Left lung (tissue), 14 donors: ENCODE measurements at regions of chr2 and their contacts with region 1.

Region 1: GRCh38 chr2:190781604-190782198 is 98.9 kb upstream of the GLS start:
- DNase-seq: peak in 1 of 4 donors; percentile 57
- ATAC-seq: peak; percentile 83
- H3K4me3 ChIP-seq: no peak overlapping the region
- H3K27ac ChIP-seq: no peak overlapping the region
- H3K4me1 ChIP-seq: peaks cover 0 to 5% of the 10 kb centered on the region in 2 donors
- H3K27me3 ChIP-seq: no peaks in the 10 kb centered on the region
- CTCF ChIP-seq: peak; percentile 43 to 52

Region 2: GRCh38 chr2:190534310-190535120 is 247.2 kb before region 1 on chr2 and contains the start of gene NEMP2:
- intact Hi-C with region 1: no loop called
- DNase-seq: peak; percentile 81 to 97 (median 86)
- ATAC-seq: peak; percentile 93
- H3K4me3 ChIP-seq: peak within 1 kb of the TSS; percentile 69 to 80
- H3K27ac ChIP-seq: peak within 1 kb of the TSS; percentile 94 to 95
- H3K4me1 ChIP-seq: peaks cover 5 to 36% of the 10 kb centered on the region in 2 donors
- H3K27me3 ChIP-seq: no peaks in the 10 kb centered on the region
- CTCF ChIP-seq: no peak
- polyA plus RNA-seq, gene NEMP2: 10.2 to 22.8 (median 17.8) TPM

Region 3: DNA sequence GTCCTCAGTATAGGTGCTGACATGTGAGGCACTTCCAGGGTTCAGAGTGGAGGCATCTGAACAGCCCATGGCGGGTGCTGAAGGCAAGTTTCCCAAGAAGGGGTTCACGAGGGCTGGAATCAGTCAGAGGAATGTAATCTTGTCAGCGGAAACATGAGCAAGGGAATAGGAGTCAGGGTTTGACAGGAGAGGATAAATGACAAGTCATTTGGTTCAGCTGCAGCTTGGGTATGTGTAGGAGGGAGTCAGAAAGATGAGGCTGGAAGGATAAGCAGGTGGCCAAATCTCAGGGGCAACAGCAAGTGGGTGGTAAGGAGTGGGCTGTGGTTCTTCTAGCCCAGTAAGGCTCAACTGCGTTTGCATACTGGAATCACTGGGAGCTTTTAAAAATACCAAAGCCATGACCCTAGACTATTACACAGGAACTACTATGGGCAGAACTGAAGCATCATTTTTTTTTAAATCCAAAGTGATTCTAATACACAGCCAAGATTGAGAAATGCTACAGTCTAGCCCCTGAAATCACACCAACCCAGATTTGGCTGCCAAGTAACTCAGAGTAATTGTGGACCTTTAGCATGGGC is 174.6 kb before region 1 on chr2:
- intact Hi-C with region 1: no loop called
- DNase-seq: no peak
- ATAC-seq: no peak
- H3K4me3 ChIP-seq: no peak overlapping the region
- H3K27ac ChIP-seq: no peak overlapping the region
- H3K4me1 ChIP-seq: no peaks in the 10 kb centered on the region
- H3K27me3 ChIP-seq: no peaks in the 10 kb centered on the region
- CTCF ChIP-seq: no peak

Region 4: DNA sequence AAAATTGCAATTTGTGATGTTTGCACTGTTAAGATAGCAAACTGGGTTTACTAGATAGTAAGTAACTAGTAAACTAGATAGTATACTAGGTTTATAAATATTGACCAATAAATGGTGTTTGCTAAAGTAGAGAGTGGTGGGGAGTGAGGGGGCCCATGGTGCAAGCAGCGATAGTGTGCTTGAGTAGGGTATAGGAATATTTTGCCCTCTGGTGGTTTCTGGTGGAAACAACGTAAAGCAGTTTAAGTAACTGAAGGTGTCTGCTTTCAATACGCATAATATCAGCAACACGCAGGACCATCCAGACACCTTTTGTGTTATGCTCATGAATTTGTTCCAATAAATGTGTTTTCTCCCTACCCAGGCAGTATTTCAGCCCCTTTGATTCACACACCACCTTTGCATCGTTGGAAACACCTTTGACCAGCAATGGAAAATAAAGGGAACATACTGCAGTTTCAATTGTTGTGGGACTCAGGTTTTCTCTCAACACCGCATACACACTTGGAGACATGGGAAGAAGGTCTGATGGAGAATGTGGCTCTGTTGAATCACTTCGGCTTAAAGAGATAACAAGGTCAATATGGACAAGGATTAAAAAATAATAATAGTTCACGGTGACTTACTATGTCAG is 248.9 kb after region 1 on chr2:
- intact Hi-C with region 1: loop called in 1 of 2 experiments (anchors 10 kb)
- DNase-seq: no peak
- ATAC-seq: peak; percentile 72
- H3K4me3 ChIP-seq: no peak overlapping the region
- H3K27ac ChIP-seq: no peak overlapping the region
- H3K4me1 ChIP-seq: peaks cover 6 to 48% of the 10 kb centered on the region in 2 donors
- H3K27me3 ChIP-seq: no peaks in the 10 kb centered on the region
- CTCF ChIP-seq: peak; percentile 65 to 70